ENCODE measurements at regions of chr5 and their contacts with region 1.

Region 1: DNA sequence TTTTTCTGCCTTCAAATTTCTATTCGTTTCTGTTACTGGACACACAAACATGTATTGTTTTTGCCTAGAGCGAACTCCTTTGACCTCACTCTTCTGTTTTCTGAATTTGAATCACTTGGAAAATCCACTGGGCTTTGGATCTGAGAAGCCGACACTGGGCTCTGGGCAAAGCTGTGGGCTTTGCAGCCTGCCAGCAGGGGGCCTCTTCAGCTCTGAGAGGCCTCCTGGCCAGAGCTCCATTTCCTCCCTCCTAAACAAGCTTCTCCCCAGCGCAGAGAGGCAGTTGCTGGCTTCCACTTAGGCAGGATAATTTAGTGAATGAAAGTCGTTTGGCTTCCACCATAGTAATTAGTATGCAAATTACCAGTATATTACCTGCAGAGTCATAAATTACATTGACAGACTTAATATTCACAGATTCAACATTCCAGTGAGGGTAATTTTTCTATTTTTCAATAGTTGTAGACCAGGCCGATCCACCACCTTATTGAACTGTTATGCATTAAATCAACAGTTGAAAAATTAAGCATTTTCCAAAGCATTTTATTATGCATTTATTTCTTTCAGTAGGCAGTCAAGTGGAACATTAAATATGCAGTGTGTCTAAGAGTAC is 104.0 kb upstream of the ZNF366 start:
- DNase-seq: peak; percentile 74
- ATAC-seq: peak; percentile 70
- H3K4me3 Mint-ChIP-seq: no peak overlapping the region
- H3K27ac Mint-ChIP-seq: no peak overlapping the region
- H3K4me1 Mint-ChIP-seq: peaks cover 8% of the 10 kb centered on the region
- H3K27me3 Mint-ChIP-seq: peaks cover 15% of the 10 kb centered on the region

Region 2: DNA sequence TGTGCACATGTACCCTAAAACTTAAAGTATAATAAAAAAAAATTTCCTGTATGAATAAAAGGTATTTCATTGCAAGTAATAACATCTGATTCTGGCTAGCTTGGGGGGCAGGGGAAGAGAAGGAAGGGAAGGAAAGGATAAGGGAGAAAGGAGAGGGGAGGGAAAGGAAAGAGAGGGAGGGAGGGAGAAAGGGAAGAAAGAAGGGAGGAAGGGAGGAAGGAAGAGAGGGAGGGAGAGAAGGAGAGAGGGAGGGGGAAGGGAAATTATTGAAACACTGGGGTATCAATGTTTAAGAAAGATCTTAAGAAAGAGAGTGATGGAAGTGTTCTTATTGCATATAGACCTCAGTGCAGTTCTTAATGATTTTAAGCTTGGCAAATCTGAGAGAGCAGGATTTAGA is 25.8 kb after region 1 on chr5:
- CTCF ChIA-PET with region 1: no interaction called
- POLR2A ChIA-PET with region 1: no interaction called
- intact Hi-C with region 1: no loop called
- DNase-seq: no peak
- ATAC-seq: no peak
- H3K4me3 Mint-ChIP-seq: no peak overlapping the region
- H3K27ac Mint-ChIP-seq: no peak overlapping the region
- H3K4me1 Mint-ChIP-seq: no peaks in the 10 kb centered on the region
- H3K27me3 Mint-ChIP-seq: peaks cover 11% of the 10 kb centered on the region

Region 3: GRCh38 chr5:72661405-72661804 is 50.2 kb after region 1 on chr5:
- CTCF ChIA-PET with region 1: no interaction called
- POLR2A ChIA-PET with region 1: no interaction called
- intact Hi-C with region 1: no loop called
- DNase-seq: no peak
- ATAC-seq: no peak
- H3K4me3 Mint-ChIP-seq: no peak overlapping the region
- H3K27ac Mint-ChIP-seq: no peak overlapping the region
- H3K4me1 Mint-ChIP-seq: no peaks in the 10 kb centered on the region
- H3K27me3 Mint-ChIP-seq: peaks cover 1% of the 10 kb centered on the region

Region 4: DNA sequence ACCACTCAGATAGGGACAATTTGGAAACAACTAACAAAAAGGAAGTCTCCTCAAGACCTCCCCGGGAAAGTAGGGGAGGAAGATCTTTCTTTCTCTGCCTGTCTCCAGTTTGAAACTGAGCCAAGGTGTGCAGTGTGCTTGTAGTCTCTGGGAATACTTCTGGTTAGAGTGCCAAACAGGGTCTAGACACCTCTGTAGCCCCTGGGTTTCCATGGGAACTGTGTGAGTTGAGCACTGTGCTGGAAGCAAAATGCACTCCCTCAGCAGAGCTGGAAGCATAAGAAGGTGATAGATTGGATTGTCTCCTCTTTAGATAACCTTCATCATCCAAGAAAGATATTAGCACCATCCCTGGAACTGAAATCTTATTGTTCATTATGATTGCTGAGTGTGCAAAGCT is 76.1 kb after region 1 on chr5:
- CTCF ChIA-PET with region 1: interaction called, 7 read pairs
- POLR2A ChIA-PET with region 1: no interaction called
- intact Hi-C with region 1: loop called in 1 of 2 experiments (anchors 10 kb)
- DNase-seq: no peak
- ATAC-seq: no peak
- H3K4me3 Mint-ChIP-seq: no peak overlapping the region
- H3K27ac Mint-ChIP-seq: no peak overlapping the region
- H3K4me1 Mint-ChIP-seq: no peaks in the 10 kb centered on the region
- H3K27me3 Mint-ChIP-seq: peaks cover 28% of the 10 kb centered on the region

Region 5: GRCh38 chr5:72733810-72734209 is 122.6 kb after region 1 on chr5:
- CTCF ChIA-PET with region 1: no interaction called
- POLR2A ChIA-PET with region 1: no interaction called
- intact Hi-C with region 1: no loop called
- DNase-seq: no peak
- ATAC-seq: no peak
- H3K4me3 Mint-ChIP-seq: no peak overlapping the region
- H3K27ac Mint-ChIP-seq: no peak overlapping the region
- H3K4me1 Mint-ChIP-seq: no peaks in the 10 kb centered on the region
- H3K27me3 Mint-ChIP-seq: peaks cover 17% of the 10 kb centered on the region

Region 6: DNA sequence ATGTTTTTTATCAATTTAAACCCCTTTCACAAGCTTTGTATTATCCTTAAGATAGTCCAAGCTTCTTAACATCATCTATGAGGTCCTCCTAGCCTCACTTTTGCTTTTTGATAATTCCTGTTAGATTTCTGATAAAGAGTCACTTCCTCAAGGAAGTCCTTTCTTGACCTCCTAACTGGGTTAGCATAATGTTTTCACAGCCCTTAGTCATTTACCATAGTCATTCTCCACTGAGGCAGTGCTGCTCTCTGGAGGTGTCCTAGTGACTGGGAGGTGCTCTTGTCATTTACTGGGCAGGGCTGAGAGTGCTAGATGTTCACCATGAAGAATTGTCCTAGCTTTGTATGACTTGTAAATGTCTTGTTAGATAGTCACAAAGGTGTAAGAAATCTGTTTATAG is 231.6 kb after region 1 on chr5:
- CTCF ChIA-PET with region 1: interaction called, 6 read pairs
- POLR2A ChIA-PET with region 1: no interaction called
- intact Hi-C with region 1: loop called in 1 of 2 experiments (anchors 1 kb)
- DNase-seq: peak; percentile 32
- ATAC-seq: peak; percentile 95
- H3K4me3 Mint-ChIP-seq: no peak overlapping the region
- H3K27ac Mint-ChIP-seq: no peak overlapping the region
- H3K4me1 Mint-ChIP-seq: peaks cover 33% of the 10 kb centered on the region
- H3K27me3 Mint-ChIP-seq: no peaks in the 10 kb centered on the region

Region 7: DNA sequence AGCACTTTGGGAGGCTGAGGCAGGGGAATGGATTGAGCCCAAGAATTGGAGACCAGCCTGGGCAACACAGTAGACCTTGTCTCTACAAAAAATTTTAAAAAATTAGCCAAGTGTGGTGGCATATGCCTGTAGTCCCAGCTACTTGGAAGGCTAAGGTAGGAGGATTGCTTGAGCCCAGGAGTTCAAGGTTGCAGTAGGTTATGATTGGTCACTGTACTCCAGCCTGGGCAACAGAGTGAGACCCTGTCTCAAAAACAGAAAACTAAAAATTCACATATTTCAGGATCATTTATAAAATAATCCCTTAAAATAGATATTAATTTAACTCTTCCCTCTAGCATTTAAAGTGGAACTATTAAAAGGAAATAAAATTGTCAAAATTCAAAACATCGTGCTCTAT is 348.0 kb after region 1 on chr5:
- CTCF ChIA-PET with region 1: no interaction called
- POLR2A ChIA-PET with region 1: no interaction called
- intact Hi-C with region 1: no loop called
- DNase-seq: no peak
- ATAC-seq: no peak
- H3K4me3 Mint-ChIP-seq: no peak overlapping the region
- H3K27ac Mint-ChIP-seq: no peak overlapping the region
- H3K4me1 Mint-ChIP-seq: peaks cover 9% of the 10 kb centered on the region
- H3K27me3 Mint-ChIP-seq: peaks cover 29% of the 10 kb centered on the region